Kidney (tissue), 22 donors: ENCODE measurements at regions of chr1 and their contacts with region 1.

Region 1: DNA sequence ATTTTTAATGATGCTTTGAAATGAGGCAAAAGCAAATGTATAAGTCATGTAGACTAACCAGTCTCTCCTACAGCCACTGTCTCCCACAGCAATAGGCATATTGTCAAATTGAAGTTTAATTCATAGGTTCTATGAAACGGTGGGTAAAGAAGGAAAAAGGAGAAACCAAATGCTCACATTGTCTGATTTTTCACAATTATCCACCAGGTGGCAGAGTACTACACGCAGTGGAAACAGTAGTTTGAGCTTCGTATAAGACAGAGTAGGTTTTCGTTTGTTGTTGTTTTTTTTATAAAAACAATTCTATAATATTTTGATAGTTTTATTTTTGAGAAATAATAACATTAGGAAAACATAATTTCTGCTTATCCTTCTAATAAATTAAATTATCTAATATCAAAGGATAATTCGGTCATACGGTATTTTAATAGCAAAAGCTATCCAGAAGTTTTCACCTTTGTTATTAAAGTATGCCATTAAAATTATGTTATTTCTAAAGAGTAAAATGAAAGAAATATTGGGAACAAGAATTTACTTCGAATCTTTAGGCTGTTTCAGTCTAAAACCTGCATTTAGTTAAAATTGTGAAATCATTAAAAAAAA is 39.1 kb downstream of the TYW3 start:
- DNase-seq: peak in 2 of 5 donors; percentile 68 to 80
- H3K4me3 ChIP-seq: no peak overlapping the region
- H3K27ac ChIP-seq: no peak overlapping the region
- H3K4me1 ChIP-seq: no peaks in the 10 kb centered on the region
- H3K27me3 ChIP-seq: no peaks in the 10 kb centered on the region
- CTCF ChIP-seq: peak; percentile 68

Region 2: GRCh38 chr1:75203415-75204277 is 431.6 kb after region 1 on chr1:
- intact Hi-C with region 1: loop called (anchors 10 kb)
- DNase-seq: peak in 2 of 5 donors; percentile 46 to 55
- H3K4me3 ChIP-seq: no peak overlapping the region
- H3K27ac ChIP-seq: no peak overlapping the region
- H3K4me1 ChIP-seq: no peaks in the 10 kb centered on the region
- H3K27me3 ChIP-seq: no peaks in the 10 kb centered on the region
- CTCF ChIP-seq: peak; percentile 62